Naive thymus-derived CD4-positive, alpha-beta T cell (primary cell): ENCODE measurements at regions of chr3 and their contacts with region 1.

Region 1: GRCh38 chr3:48898383-48899234 is at the start of gene SLC25A20:
- DNase-seq: peak; percentile 78 to 95 (median 85)
- ATAC-seq: peak; percentile 98
- H3K4me3 ChIP-seq: peak within 1 kb of the TSS; percentile 91
- H3K4me3 Mint-ChIP-seq: peak within 1 kb of the TSS; percentile 89 to 99 (median 94)
- H3K27ac ChIP-seq: peak within 1 kb of the TSS; percentile 76
- H3K27ac Mint-ChIP-seq: peak within 1 kb of the TSS; percentile 83 to 99 (median 93)
- H3K4me1 ChIP-seq: peaks cover 21 to 23% of the 10 kb centered on the region in 2 donors
- H3K4me1 Mint-ChIP-seq: peaks cover 27 to 51% (median 41%) of the 10 kb centered on the region in 7 donors
- H3K27me3 ChIP-seq: no peaks in the 10 kb centered on the region
- H3K27me3 Mint-ChIP-seq: no peaks in the 10 kb centered on the region
- total RNA-seq, gene SLC25A20: 6.6 to 27.3 (median 12.8) TPM

Region 2: DNA sequence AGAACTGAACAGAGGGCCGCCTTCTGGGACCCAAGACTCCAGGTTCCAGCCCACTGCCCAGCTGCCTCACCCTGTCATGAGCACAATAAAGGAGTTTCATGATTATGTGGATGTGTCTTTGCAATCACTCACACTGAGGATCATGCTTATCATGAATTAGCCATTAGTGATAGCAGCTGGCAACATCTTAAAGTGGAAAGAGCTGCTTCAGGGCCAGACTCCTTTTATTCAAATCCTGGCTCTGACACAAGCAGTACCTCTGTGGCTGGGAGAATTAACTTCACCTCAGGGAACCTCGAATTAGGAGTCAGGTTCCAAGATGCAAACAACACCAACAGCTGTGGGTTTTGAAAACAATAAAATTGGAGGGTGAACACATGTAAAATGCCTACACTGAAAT is 1416.2 kb before region 1 on chr3:
- CTCF ChIA-PET with region 1: no interaction called
- POLR2A ChIA-PET with region 1: no interaction called
- intact Hi-C with region 1: no loop called
- DNase-seq: no peak
- ATAC-seq: no peak
- H3K4me3 ChIP-seq: no peak overlapping the region
- H3K4me3 Mint-ChIP-seq: no peak overlapping the region
- H3K27ac ChIP-seq: no peak overlapping the region
- H3K27ac Mint-ChIP-seq: peak overlapping the region in 2 of 9 donors; percentile 28 to 41
- H3K4me1 ChIP-seq: no peaks in the 10 kb centered on the region
- H3K4me1 Mint-ChIP-seq: peaks cover 0 to 5% (median 0%) of the 10 kb centered on the region in 7 donors
- H3K27me3 ChIP-seq: no peaks in the 10 kb centered on the region
- H3K27me3 Mint-ChIP-seq: no peaks in the 10 kb centered on the region

Region 3: DNA sequence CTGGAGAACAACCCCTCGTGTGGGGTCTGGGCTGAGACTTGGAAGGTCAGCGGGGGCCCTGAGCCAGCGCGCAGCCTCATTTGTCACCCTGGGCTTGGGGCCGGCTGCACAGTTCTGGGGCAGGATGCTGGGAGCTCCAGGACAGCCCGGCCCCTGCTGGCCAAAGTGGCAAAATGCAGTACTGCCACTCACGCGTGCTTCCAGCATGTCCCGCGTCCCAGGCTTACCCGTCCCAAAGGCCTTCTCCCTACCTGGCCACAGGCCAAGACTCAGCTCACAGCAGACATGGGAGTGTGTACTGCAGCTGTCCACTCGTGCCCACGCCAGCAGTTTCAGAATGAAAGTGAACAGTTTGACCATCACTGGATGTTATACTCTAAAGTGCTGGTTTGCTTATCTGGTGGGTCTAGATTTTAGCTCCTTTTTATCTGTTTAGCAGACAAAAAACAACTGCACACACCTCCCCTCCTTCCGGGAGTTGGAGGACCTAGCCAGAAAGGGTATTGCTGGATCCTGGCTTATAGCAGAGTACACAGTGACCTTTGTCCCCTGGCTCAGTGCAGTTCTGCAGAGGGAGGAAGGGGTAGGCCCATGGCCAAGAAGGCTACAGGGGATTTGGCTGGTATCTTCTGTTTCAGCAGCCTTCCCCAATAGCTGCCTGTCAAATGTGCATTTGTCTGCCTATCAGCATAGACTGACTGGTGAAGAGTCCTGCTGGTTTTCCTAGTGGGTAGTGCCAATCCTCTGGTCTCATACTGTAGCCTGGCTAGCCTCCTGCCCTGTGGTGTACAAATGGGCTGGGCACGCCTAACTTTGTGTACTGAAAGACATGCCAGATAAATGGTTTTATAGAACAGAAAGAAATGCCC is 158.4 kb before region 1 on chr3:
- CTCF ChIA-PET with region 1: no interaction called
- POLR2A ChIA-PET with region 1: interaction called, 6 read pairs
- intact Hi-C with region 1: loop called in 1 of 2 experiments (anchors 1 kb)
- DNase-seq: peak; percentile 8 to 55 (median 35)
- ATAC-seq: peak; percentile 90
- H3K4me3 ChIP-seq: no peak overlapping the region
- H3K4me3 Mint-ChIP-seq: no peak overlapping the region
- H3K27ac ChIP-seq: no peak overlapping the region
- H3K27ac Mint-ChIP-seq: peak overlapping the region in 2 of 9 donors; percentile 1 to 6
- H3K4me1 ChIP-seq: no peaks in the 10 kb centered on the region
- H3K4me1 Mint-ChIP-seq: peaks cover 0 to 9% (median 0%) of the 10 kb centered on the region in 7 donors
- H3K27me3 ChIP-seq: no peaks in the 10 kb centered on the region
- H3K27me3 Mint-ChIP-seq: no peaks in the 10 kb centered on the region

Region 4: GRCh38 chr3:48784426-48785120 is 114.0 kb before region 1 on chr3:
- CTCF ChIA-PET with region 1: no interaction called
- POLR2A ChIA-PET with region 1: no interaction called
- intact Hi-C with region 1: loop called in 1 of 2 experiments (anchors 2 kb)
- DNase-seq: no peak
- ATAC-seq: no peak
- H3K4me3 ChIP-seq: no peak overlapping the region
- H3K4me3 Mint-ChIP-seq: no peak overlapping the region
- H3K27ac ChIP-seq: no peak overlapping the region
- H3K27ac Mint-ChIP-seq: peak overlapping the region in 2 of 9 donors; percentile 12 to 16
- H3K4me1 ChIP-seq: peaks cover 6 to 12% of the 10 kb centered on the region in 2 donors
- H3K4me1 Mint-ChIP-seq: peaks cover 9 to 16% (median 15%) of the 10 kb centered on the region in 7 donors
- H3K27me3 ChIP-seq: no peaks in the 10 kb centered on the region
- H3K27me3 Mint-ChIP-seq: no peaks in the 10 kb centered on the region

Region 5: GRCh38 chr3:48811524-48811923 is 87.1 kb before region 1 on chr3:
- CTCF ChIA-PET with region 1: no interaction called
- POLR2A ChIA-PET with region 1: no interaction called
- intact Hi-C with region 1: loop called in 1 of 2 experiments (anchors 1 kb)
- DNase-seq: no peak
- ATAC-seq: no peak
- H3K4me3 ChIP-seq: no peak overlapping the region
- H3K4me3 Mint-ChIP-seq: peak overlapping the region in 5 of 10 donors; percentile 16 to 51 (median 33)
- H3K27ac ChIP-seq: peak overlapping the region; percentile 64
- H3K27ac Mint-ChIP-seq: peak overlapping the region; percentile 64 to 97 (median 89)
- H3K4me1 ChIP-seq: peaks cover 16 to 18% of the 10 kb centered on the region in 2 donors
- H3K4me1 Mint-ChIP-seq: peaks cover 22 to 47% (median 40%) of the 10 kb centered on the region in 7 donors
- H3K27me3 ChIP-seq: no peaks in the 10 kb centered on the region
- H3K27me3 Mint-ChIP-seq: no peaks in the 10 kb centered on the region

Region 6: DNA sequence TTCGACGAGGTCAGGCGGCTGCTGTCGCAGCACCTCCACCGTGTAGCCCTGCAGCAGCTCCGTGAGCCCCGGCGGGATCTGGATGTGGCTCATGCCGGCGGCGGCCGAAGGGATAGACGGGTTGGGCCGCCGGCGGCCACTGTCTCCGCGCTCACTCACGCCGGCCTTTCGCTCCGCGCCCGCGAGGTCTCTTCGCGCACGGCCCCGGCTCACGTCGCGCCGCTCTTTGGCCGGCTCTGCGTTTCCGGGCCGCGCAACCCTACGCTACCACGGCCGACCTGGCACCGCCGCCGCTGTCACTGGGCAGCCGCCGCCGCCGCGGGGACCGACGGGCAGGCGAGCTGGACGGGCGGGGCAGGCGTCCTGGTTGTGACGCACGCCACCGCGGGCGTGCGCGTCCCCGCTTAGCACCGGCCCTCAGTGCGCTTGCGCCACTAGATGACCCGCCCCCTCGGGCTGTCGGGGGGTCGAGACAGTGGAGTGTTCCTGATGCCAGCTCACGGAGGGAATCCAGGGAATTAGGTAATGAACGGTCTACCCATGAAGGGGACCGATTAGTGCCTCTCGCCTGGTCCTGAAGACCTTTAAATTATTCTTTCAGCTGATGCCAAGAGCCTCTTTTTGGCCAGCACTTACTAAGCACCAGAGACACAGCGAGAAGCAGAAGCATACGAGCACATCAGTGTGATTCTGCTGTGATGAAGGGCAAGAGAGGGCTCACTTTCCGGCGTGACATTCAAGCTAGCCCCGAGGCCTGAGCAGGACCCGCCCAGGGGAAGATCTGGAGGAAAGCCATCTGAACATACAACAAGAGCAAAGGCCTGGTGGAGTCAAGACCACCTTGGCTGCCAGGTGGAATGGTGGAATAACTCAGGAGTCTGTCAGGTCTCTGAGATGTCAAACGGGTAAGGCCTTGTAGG is 50.8 kb before region 1 on chr3 and contains the start of gene PRKAR2A:
- CTCF ChIA-PET with region 1: interaction called, 4 read pairs
- POLR2A ChIA-PET with region 1: no interaction called
- intact Hi-C with region 1: loop called (anchors 1 kb)
- DNase-seq: peak; percentile 51 to 87 (median 67)
- ATAC-seq: peak; percentile 92
- H3K4me3 ChIP-seq: peak within 1 kb of the TSS; percentile 70
- H3K4me3 Mint-ChIP-seq: peak within 1 kb of the TSS; percentile 86 to 93 (median 90)
- H3K27ac ChIP-seq: peak within 1 kb of the TSS; percentile 79
- H3K27ac Mint-ChIP-seq: peak within 1 kb of the TSS; percentile 81 to 98 (median 94)
- H3K4me1 ChIP-seq: peaks cover 15 to 21% of the 10 kb centered on the region in 2 donors
- H3K4me1 Mint-ChIP-seq: peaks cover 12 to 34% (median 28%) of the 10 kb centered on the region in 7 donors
- H3K27me3 ChIP-seq: no peaks in the 10 kb centered on the region
- H3K27me3 Mint-ChIP-seq: no peaks in the 10 kb centered on the region
- total RNA-seq, gene PRKAR2A: 25.9 to 45.1 (median 38.9) TPM

Region 7: GRCh38 chr3:48929358-48930035 is 30.9 kb after region 1 on chr3:
- CTCF ChIA-PET with region 1: interaction called, 3 read pairs
- POLR2A ChIA-PET with region 1: no interaction called
- intact Hi-C with region 1: loop called (anchors 5 kb)
- DNase-seq: no peak
- ATAC-seq: no peak
- H3K4me3 ChIP-seq: no peak overlapping the region
- H3K4me3 Mint-ChIP-seq: peak overlapping the region in 8 of 10 donors; percentile 0 to 54 (median 42)
- H3K27ac ChIP-seq: no peak overlapping the region
- H3K27ac Mint-ChIP-seq: peak overlapping the region in 4 of 9 donors; percentile 10 to 43 (median 28)
- H3K4me1 ChIP-seq: peaks cover 28 to 33% of the 10 kb centered on the region in 2 donors
- H3K4me1 Mint-ChIP-seq: peaks cover 54 to 81% (median 76%) of the 10 kb centered on the region in 7 donors
- H3K27me3 ChIP-seq: no peaks in the 10 kb centered on the region
- H3K27me3 Mint-ChIP-seq: no peaks in the 10 kb centered on the region